Dendritic cell treated with granulocyte-macrophage colony-stimulating factor and Interleukin-4, amounts not matched to agents 40 ng/mL and 50 ng/mL, for 4 days (primary cell): ENCODE measurements at regions of chr9 and their contacts with region 1.

Region 1: GRCh38 chr9:125631391-125632085 is 75.5 kb downstream of the MAPKAP1 start:
- H3K4me3 Mint-ChIP-seq: peak overlapping the region; percentile 0
- H3K27ac Mint-ChIP-seq: peak overlapping the region; percentile 77
- H3K4me1 Mint-ChIP-seq: peaks cover 75% of the 10 kb centered on the region
- H3K27me3 Mint-ChIP-seq: no peaks in the 10 kb centered on the region

Region 2: DNA sequence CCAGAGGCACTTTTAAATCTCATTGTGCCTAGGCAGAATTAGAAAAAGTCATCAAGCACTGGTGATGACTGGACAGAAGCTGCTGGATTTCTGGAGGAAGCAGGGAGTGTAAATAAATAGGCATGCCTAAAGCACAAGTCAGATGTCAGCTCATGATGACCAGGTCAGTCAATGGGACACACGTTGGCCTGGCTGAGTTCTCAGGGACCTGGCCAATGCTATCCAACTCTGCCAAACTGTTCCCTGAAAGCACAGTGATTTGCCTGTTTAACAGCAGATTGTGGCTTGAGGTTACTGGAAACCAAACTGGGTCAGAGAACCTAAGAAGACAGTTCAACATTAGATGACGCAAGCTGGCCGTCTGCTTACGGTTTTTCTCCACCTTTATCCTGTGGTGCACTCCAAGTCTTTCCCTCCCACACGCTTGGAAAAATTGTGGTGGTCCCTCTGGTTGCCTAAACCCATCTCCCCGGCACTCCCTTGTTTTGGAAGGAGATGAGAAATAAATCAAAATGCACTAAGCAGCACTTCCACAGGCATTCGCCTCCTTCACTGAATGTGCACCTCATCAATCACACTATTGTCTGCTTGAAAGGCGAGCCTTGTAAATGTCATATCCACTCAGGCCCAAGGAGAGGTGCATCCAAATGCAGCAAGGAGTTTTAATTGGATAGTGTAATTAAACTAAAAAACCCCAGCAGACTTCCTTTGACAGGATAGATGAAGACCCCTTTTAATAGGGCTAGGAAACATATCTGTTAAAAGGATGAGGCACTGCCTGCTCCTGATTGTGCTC is 170.5 kb before region 1 on chr9:
- intact Hi-C with region 1: no loop called
- H3K4me3 Mint-ChIP-seq: no peak overlapping the region
- H3K27ac Mint-ChIP-seq: no peak overlapping the region
- H3K4me1 Mint-ChIP-seq: no peaks in the 10 kb centered on the region
- H3K27me3 Mint-ChIP-seq: no peaks in the 10 kb centered on the region

Region 3: GRCh38 chr9:125472926-125473701 is 158.4 kb before region 1 on chr9:
- intact Hi-C with region 1: no loop called
- H3K4me3 Mint-ChIP-seq: no peak overlapping the region
- H3K27ac Mint-ChIP-seq: no peak overlapping the region
- H3K4me1 Mint-ChIP-seq: no peaks in the 10 kb centered on the region
- H3K27me3 Mint-ChIP-seq: no peaks in the 10 kb centered on the region

Region 4: GRCh38 chr9:125558453-125559092 is 73.0 kb before region 1 on chr9:
- intact Hi-C with region 1: loop called (anchors 1 kb)
- H3K4me3 Mint-ChIP-seq: no peak overlapping the region
- H3K27ac Mint-ChIP-seq: no peak overlapping the region
- H3K4me1 Mint-ChIP-seq: no peaks in the 10 kb centered on the region
- H3K27me3 Mint-ChIP-seq: no peaks in the 10 kb centered on the region

Region 5: GRCh38 chr9:125650271-125650737 is 18.8 kb after region 1 on chr9:
- intact Hi-C with region 1: loop called (anchors 2 kb)
- H3K4me3 Mint-ChIP-seq: peak overlapping the region; percentile 63
- H3K27ac Mint-ChIP-seq: peak overlapping the region; percentile 90
- H3K4me1 Mint-ChIP-seq: peaks cover 79% of the 10 kb centered on the region
- H3K27me3 Mint-ChIP-seq: no peaks in the 10 kb centered on the region

Region 6: DNA sequence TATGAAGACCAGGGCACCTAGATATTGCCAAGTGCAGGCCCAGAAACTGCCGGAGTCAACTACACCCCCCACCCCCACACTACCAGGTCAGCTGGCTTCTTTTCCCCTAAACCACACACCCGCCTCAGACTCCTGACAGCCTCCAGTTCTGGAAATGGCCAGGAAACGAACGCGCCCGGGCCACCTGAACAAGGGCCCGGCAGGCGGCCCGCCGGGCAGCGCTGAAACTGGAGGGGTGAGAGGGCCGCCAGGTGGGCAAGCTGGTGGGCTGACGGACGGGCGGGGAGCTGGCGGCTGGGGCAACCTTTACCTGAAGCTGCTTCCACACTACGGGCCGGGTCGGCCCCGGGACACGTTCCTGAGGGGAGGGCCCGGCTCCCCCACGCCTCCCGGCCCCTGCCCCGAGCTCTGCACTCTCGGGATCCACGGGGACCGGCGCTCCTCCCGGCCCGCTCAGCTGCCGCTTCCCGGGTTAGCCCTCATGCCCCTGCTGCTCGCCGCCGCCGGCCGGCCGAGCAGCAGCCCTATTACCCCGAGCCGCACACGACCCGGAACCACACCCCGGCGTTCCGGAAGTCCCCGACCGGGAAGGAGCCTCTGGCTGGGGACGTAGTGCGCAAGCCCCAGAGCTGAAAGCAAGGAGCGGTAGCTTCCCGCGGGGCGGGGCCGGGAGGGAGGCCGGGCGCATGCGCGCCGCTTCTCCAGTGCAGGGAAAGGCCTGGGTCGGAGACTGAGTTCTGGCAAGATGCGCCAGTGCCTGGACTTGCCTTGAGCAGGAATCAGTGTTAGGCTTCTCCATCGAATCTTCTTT is 75.3 kb after region 1 on chr9 and contains the start of gene MAPKAP1:
- intact Hi-C with region 1: loop called (anchors 10 kb)
- H3K4me3 Mint-ChIP-seq: peak within 1 kb of the TSS; percentile 86
- H3K27ac Mint-ChIP-seq: peak within 1 kb of the TSS; percentile 90
- H3K4me1 Mint-ChIP-seq: peaks cover 42% of the 10 kb centered on the region
- H3K27me3 Mint-ChIP-seq: no peaks in the 10 kb centered on the region

Region 7: GRCh38 chr9:125746017-125746773 is 114.7 kb after region 1 on chr9:
- intact Hi-C with region 1: loop called (anchors 5 kb)
- H3K4me3 Mint-ChIP-seq: peak overlapping the region; percentile 88
- H3K27ac Mint-ChIP-seq: peak overlapping the region; percentile 88
- H3K4me1 Mint-ChIP-seq: peaks cover 39% of the 10 kb centered on the region
- H3K27me3 Mint-ChIP-seq: peaks cover 7% of the 10 kb centered on the region

Region 8: DNA sequence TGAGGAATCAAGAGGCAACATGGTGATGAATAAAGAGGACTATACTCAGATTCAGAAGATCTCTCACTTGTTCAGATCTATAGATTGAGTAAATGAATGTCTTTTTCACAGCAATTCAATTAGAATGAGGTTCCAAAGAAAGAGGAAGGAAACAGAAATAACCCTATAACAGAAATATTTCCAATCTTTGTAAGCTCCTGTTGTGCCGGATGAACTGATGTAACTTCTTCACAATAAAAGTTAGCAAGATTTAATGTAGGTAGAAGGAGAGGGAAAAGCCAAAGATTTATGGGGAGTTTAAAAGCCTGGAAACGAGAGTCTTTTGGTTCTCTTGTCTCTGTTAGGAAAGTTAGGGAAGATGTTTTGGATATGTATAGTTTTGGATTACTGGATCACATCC is 207.8 kb after region 1 on chr9:
- intact Hi-C with region 1: loop called (anchors 5 kb)
- H3K4me3 Mint-ChIP-seq: peak overlapping the region; percentile 66
- H3K27ac Mint-ChIP-seq: peak overlapping the region; percentile 76
- H3K4me1 Mint-ChIP-seq: peaks cover 63% of the 10 kb centered on the region
- H3K27me3 Mint-ChIP-seq: no peaks in the 10 kb centered on the region